ENCODE measurements at regions of chr14 and their contacts with region 1.

Region 1: DNA sequence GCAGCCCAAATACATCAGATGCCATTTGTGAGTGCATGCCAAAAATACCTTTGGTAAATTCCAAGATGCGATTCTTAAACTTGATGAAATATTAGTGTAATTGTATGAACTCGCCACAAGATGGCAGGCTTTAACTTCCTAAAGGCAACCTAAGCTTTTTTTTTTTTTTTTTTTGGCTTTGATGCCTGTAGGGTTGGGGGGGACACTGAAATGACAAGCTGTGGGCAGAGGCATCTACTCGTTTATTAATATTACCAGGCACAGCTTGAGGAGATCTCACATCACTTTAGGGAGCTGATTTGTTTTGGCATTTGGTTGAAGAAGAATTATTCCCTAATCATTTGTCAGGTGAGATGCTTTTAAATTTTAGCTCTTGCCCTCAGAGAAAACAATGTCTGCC is 126.7 kb upstream of the CCDC196 start:
- DNase-seq: no peak
- H3K4me3 Mint-ChIP-seq: no peak overlapping the region
- H3K27ac Mint-ChIP-seq: no peak overlapping the region
- H3K4me1 Mint-ChIP-seq: no peaks in the 10 kb centered on the region
- H3K27me3 Mint-ChIP-seq: peaks cover 7% of the 10 kb centered on the region

Region 2: GRCh38 chr14:66330916-66331315 is 28.6 kb before region 1 on chr14:
- CTCF ChIA-PET with region 1: no interaction called
- POLR2A ChIA-PET with region 1: no interaction called
- DNase-seq: no peak
- H3K4me3 Mint-ChIP-seq: no peak overlapping the region
- H3K27ac Mint-ChIP-seq: no peak overlapping the region
- H3K4me1 Mint-ChIP-seq: no peaks in the 10 kb centered on the region
- H3K27me3 Mint-ChIP-seq: peaks cover 4% of the 10 kb centered on the region

Region 3: GRCh38 chr14:66395300-66395699 is 35.8 kb after region 1 on chr14:
- CTCF ChIA-PET with region 1: interaction called, 29 read pairs
- POLR2A ChIA-PET with region 1: no interaction called
- DNase-seq: peak; percentile 48
- H3K4me3 Mint-ChIP-seq: no peak overlapping the region
- H3K27ac Mint-ChIP-seq: no peak overlapping the region
- H3K4me1 Mint-ChIP-seq: peaks cover 7% of the 10 kb centered on the region
- H3K27me3 Mint-ChIP-seq: peaks cover 4% of the 10 kb centered on the region

Region 4: DNA sequence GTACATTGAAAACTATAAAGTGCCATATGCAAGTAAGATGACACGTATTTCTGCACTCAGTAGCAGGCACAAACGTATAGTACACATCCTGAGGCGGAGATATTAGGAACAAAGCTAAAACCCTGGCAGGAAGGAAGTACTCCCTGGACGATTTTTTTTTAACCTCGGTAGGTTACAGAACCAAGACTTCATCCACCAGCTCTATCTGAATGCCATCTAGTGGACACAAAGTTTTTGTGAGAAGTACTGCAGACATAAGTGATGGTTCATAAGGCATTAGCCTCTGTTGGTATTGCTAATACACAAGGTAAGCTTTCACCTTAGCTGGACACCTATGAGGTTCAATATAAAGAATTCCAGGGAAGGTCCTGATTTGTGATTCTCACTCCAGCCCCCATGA is 43.7 kb after region 1 on chr14:
- CTCF ChIA-PET with region 1: interaction called, 27 read pairs
- POLR2A ChIA-PET with region 1: no interaction called
- DNase-seq: no peak
- H3K4me3 Mint-ChIP-seq: no peak overlapping the region
- H3K27ac Mint-ChIP-seq: no peak overlapping the region
- H3K4me1 Mint-ChIP-seq: peaks cover 5% of the 10 kb centered on the region
- H3K27me3 Mint-ChIP-seq: no peaks in the 10 kb centered on the region

Region 5: GRCh38 chr14:67111022-67111421 is 751.5 kb after region 1 on chr14:
- CTCF ChIA-PET with region 1: interaction called, 10 read pairs
- POLR2A ChIA-PET with region 1: no interaction called
- DNase-seq: no peak
- H3K4me3 Mint-ChIP-seq: no peak overlapping the region
- H3K27ac Mint-ChIP-seq: no peak overlapping the region
- H3K4me1 Mint-ChIP-seq: no peaks in the 10 kb centered on the region
- H3K27me3 Mint-ChIP-seq: no peaks in the 10 kb centered on the region

Measured in activated CD4-positive, alpha-beta memory T cell treated with anti-CD3 and anti-CD28 coated beads, Interleukin-2, amount 10 ng/mL, durations not matched to agents 7 days and 5 days (primary cell).